ENCODE measurements at regions of chr3 and their contacts with region 1.

Region 1: GRCh38 chr3:30319713-30320112 is 286.7 kb upstream of the TGFBR2 start:
- DNase-seq: peak; percentile 36
- ATAC-seq: peak; percentile 68
- H3K4me3 Mint-ChIP-seq: no peak overlapping the region
- H3K27ac Mint-ChIP-seq: no peak overlapping the region
- H3K4me1 Mint-ChIP-seq: peaks cover 2% of the 10 kb centered on the region
- H3K27me3 Mint-ChIP-seq: no peaks in the 10 kb centered on the region

Region 2: GRCh38 chr3:30206051-30206450 is 113.7 kb before region 1 on chr3:
- CTCF ChIA-PET with region 1: no interaction called
- POLR2A ChIA-PET with region 1: no interaction called
- DNase-seq: no peak
- ATAC-seq: no peak
- H3K4me3 Mint-ChIP-seq: no peak overlapping the region
- H3K27ac Mint-ChIP-seq: no peak overlapping the region
- H3K4me1 Mint-ChIP-seq: peaks cover 17% of the 10 kb centered on the region
- H3K27me3 Mint-ChIP-seq: no peaks in the 10 kb centered on the region

Region 3: GRCh38 chr3:30347679-30348216 is 28.0 kb after region 1 on chr3:
- CTCF ChIA-PET with region 1: interaction called, 31 read pairs
- POLR2A ChIA-PET with region 1: no interaction called
- DNase-seq: peak; percentile 69
- ATAC-seq: peak; percentile 99
- H3K4me3 Mint-ChIP-seq: peak overlapping the region; percentile 39
- H3K27ac Mint-ChIP-seq: peak overlapping the region; percentile 81
- H3K4me1 Mint-ChIP-seq: peaks cover 75% of the 10 kb centered on the region
- H3K27me3 Mint-ChIP-seq: peaks cover 4% of the 10 kb centered on the region

Region 4: GRCh38 chr3:30435861-30436331 is 116.2 kb after region 1 on chr3:
- CTCF ChIA-PET with region 1: interaction called, 10 read pairs
- POLR2A ChIA-PET with region 1: no interaction called
- DNase-seq: peak; percentile 23
- ATAC-seq: peak; percentile 55
- H3K4me3 Mint-ChIP-seq: peak overlapping the region; percentile 65
- H3K27ac Mint-ChIP-seq: peak overlapping the region; percentile 72
- H3K4me1 Mint-ChIP-seq: peaks cover 27% of the 10 kb centered on the region
- H3K27me3 Mint-ChIP-seq: no peaks in the 10 kb centered on the region

Measured in activated CD8-positive, alpha-beta T cell treated with anti-CD3 and anti-CD28 coated beads, Interleukin-2, amount 10 ng/mL, durations not matched to agents 7 days and 5 days (primary cell).